MCF 10A (cell line): ENCODE measurements at regions of chr3 and their contacts with region 1.

Region 1: DNA sequence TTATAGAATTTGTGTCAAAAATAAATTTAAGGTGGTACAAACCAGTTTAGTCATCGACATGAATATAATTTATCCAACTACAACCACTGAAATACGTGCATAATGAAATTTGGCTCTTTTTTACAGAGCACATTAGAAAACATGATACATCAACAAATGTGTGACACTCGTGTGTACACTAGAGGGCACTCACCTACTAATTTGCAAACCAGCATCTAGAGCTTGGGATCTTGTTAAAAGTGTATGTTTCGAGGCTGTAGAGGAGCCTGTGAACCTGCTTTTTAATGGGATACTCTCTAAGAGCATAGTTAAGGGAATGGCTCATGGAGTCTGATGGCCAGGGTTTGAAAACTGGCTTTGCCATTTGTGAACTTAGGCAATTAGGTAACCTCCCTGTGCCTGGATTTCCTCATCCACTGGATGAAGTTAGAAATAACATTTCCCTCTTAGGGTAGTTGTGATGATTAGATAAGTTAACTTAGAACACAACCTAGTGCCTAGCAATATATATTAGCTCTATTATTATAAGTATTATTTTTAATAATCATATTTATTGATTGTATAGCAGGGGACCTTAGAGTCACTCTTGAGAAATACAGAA is 8.8 kb upstream of the CPOX start:
- DNase-seq: peak; percentile 70
- H3K4me3 Mint-ChIP-seq: no peak overlapping the region
- H3K27ac Mint-ChIP-seq: no peak overlapping the region
- H3K4me1 Mint-ChIP-seq: no peaks in the 10 kb centered on the region
- H3K27me3 Mint-ChIP-seq: no peaks in the 10 kb centered on the region
- CTCF ChIP-seq: peak; percentile 77

Region 2: DNA sequence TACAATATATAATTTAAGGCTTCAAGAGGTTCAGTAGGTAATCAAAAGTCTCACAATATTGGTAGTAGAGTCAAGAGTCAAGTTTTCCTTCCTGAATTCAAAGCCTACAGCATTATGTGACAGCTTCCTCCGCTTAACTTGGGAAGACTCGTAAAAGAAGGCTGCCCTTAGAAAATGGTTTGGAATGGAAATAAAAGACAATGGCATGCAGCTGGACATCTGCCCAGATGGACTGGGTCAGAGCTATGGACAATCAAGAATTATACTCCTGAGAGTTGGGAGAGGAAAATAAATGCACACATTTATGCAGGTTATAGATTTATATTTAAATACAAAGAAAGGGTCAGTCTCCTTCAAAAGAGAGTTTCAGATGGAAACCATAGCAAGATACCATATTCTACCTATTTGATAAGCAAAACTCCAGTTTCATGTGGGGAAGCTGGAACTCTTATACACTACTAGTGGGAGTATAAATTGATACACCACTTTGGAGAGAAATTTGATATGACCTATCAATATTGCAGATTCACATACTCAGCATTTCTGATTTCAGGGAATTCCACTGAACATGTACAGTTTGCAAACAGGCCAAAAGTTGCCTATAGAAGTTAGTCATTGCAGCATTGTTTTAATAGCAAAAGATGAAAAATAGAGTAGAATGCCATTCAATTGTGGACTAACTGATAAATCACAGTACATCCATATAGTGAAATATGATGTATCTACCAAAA is 774.3 kb before region 1 on chr3:
- CTCF ChIA-PET with region 1: no interaction called
- POLR2A ChIA-PET with region 1: no interaction called
- intact Hi-C with region 1: no loop called
- DNase-seq: no peak
- H3K4me3 Mint-ChIP-seq: no peak overlapping the region
- H3K27ac Mint-ChIP-seq: no peak overlapping the region
- H3K4me1 Mint-ChIP-seq: peaks cover 21% of the 10 kb centered on the region
- H3K27me3 Mint-ChIP-seq: no peaks in the 10 kb centered on the region
- CTCF ChIP-seq: no peak

Region 3: GRCh38 chr3:98612587-98612986 is 10.4 kb after region 1 on chr3:
- CTCF ChIA-PET with region 1: interaction called, 56 read pairs
- POLR2A ChIA-PET with region 1: no interaction called
- intact Hi-C with region 1: no loop called
- DNase-seq: peak; percentile 74
- H3K4me3 Mint-ChIP-seq: no peak overlapping the region
- H3K27ac Mint-ChIP-seq: no peak overlapping the region
- H3K4me1 Mint-ChIP-seq: peaks cover 6% of the 10 kb centered on the region
- H3K27me3 Mint-ChIP-seq: no peaks in the 10 kb centered on the region
- CTCF ChIP-seq: no peak

Region 4: DNA sequence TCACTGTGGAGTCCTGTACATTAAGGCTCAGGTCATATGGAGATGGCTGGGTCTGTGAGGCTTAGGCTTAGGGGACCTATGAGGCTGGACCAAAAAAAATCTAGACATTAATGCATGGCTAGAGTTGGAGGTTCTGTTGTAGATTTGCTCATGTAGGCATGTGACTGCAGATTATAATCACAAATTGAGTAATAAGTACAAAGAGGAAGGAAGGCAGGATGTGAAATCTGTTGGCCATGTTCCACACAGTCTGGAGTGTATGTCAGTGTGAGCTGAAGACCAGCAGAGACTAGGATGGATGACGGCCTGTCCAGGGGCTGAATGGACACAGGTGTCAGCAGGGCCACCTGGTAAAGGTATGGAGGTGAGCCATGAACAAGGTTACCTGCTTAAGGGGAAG is 160.9 kb after region 1 on chr3 and contains the start of gene ST3GAL6:
- CTCF ChIA-PET with region 1: interaction called, 10 read pairs
- POLR2A ChIA-PET with region 1: no interaction called
- intact Hi-C with region 1: no loop called
- DNase-seq: peak; percentile 45
- H3K4me3 Mint-ChIP-seq: no peak within 1 kb of the TSS
- H3K27ac Mint-ChIP-seq: no peak within 1 kb of the TSS
- H3K4me1 Mint-ChIP-seq: peaks cover 15% of the 10 kb centered on the region
- H3K27me3 Mint-ChIP-seq: no peaks in the 10 kb centered on the region
- CTCF ChIP-seq: no peak
- total RNA-seq, gene ST3GAL6: 1.2 and 1.5 TPM in 2 replicates

Region 5: DNA sequence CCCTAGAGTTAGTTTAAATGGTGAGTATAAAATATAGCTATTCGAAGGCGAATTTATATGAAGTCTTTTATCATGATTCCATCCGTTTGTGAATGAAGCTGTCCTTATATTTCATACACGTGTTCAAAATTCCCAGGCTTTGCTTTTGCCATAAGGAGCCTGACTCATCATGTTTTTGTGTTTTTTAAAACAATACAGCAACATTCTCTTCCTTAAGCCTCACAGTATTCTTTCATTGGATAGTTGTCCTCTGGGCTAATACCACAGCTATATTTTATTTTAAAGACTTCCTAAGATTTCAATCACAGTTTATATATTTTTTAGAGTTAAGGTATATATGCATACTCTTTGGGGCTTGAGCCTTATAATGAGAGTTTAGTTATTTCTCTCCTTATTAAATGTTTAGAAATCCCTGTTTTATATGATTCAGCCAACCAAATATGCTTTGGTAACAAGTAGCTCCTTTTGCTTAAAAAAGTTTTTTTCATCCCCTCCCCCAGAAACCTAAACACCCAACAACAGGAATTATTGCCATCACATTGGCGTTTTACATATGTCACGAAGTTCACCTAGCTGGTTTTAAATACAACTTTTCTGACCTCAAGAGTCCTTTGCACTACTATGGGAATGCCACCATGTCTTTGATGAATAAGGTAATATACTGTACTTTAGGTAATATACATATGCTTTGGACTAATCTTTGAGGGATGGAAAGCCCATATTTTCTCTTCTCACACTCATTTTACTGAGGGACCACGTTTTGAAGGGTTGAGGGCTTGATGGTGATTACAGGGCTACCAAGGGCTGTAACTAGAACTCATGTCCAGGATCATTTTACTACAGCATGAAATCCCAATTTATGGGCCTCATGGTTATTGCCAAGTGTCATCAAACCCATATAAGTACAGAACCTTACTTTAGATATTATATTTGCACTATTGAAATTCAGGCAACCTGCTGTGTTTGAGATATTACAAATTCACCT is 189.5 kb after region 1 on chr3:
- CTCF ChIA-PET with region 1: interaction called, 24 read pairs
- POLR2A ChIA-PET with region 1: no interaction called
- intact Hi-C with region 1: no loop called
- DNase-seq: peak; percentile 42
- H3K4me3 Mint-ChIP-seq: no peak overlapping the region
- H3K27ac Mint-ChIP-seq: peak overlapping the region; percentile 77
- H3K4me1 Mint-ChIP-seq: peaks cover 17% of the 10 kb centered on the region
- H3K27me3 Mint-ChIP-seq: no peaks in the 10 kb centered on the region
- CTCF ChIP-seq: no peak

Region 6: GRCh38 chr3:98817547-98818041 is 215.4 kb after region 1 on chr3:
- CTCF ChIA-PET with region 1: interaction called, 407 read pairs
- POLR2A ChIA-PET with region 1: interaction called, 8 read pairs
- intact Hi-C with region 1: loop called (anchors 1 kb)
- DNase-seq: peak; percentile 50
- H3K4me3 Mint-ChIP-seq: no peak overlapping the region
- H3K27ac Mint-ChIP-seq: peak overlapping the region; percentile 27
- H3K4me1 Mint-ChIP-seq: peaks cover 13% of the 10 kb centered on the region
- H3K27me3 Mint-ChIP-seq: no peaks in the 10 kb centered on the region
- CTCF ChIP-seq: peak; percentile 53

Region 7: DNA sequence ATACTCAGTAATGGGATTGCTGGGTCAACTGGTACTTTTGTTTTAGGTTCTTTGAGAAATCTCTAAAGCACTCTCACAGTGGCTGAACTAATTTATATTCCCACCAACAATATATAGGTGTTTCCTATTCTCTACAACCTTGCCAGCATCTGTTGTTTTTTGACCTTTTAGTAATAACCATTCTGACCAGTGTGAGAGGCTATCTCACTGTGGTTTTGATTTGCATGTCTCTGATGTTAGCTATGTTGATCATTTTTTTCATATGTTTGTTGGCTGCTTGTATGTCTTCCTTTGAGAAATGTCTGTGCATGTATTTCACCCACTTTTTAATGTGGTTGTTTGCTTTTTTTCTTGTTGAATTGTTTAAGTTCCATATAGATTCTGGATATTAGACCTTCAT is 397.5 kb after region 1 on chr3:
- CTCF ChIA-PET with region 1: interaction called, 51 read pairs
- POLR2A ChIA-PET with region 1: no interaction called
- intact Hi-C with region 1: loop called (anchors 1 kb)
- DNase-seq: no peak
- H3K4me3 Mint-ChIP-seq: no peak overlapping the region
- H3K27ac Mint-ChIP-seq: no peak overlapping the region
- H3K4me1 Mint-ChIP-seq: no peaks in the 10 kb centered on the region
- H3K27me3 Mint-ChIP-seq: no peaks in the 10 kb centered on the region
- CTCF ChIP-seq: no peak